Gastrocnemius medialis (tissue), 4 donors: ENCODE measurements at regions of chr1 and their contacts with region 1.

Region 1: GRCh38 chr1:230215031-230215430 is 148.0 kb downstream of the GALNT2 start:
- DNase-seq: peak; percentile 65 to 83
- ATAC-seq: peak; percentile 74 to 88
- H3K4me3 ChIP-seq: peak overlapping the region in 1 of 4 donors; percentile 14
- H3K27ac ChIP-seq: peak overlapping the region; percentile 73 to 81 (median 77)
- H3K4me1 ChIP-seq: peaks cover 52 to 75% of the 10 kb centered on the region in 2 donors
- H3K27me3 ChIP-seq: no peaks in the 10 kb centered on the region
- CTCF ChIP-seq: peak in 4 of 5 experiments; percentile 55 to 78 (median 74)
- POLR2A ChIP-seq: no peak

Region 2: GRCh38 chr1:229848752-229849677 is 366.0 kb before region 1 on chr1:
- in situ Hi-C with region 1: loop called in 1 of 4 experiments (anchors 10 kb)
- intact Hi-C with region 1: no loop called
- DNase-seq: no peak
- ATAC-seq: no peak
- H3K4me3 ChIP-seq: no peak overlapping the region
- H3K27ac ChIP-seq: no peak overlapping the region
- H3K4me1 ChIP-seq: peaks cover 17 to 20% of the 10 kb centered on the region in 2 donors
- H3K27me3 ChIP-seq: no peaks in the 10 kb centered on the region
- CTCF ChIP-seq: peak in 3 of 5 experiments; percentile 16 to 48 (median 40)
- POLR2A ChIP-seq: no peak

Region 3: GRCh38 chr1:230011333-230012092 is 203.5 kb before region 1 on chr1:
- in situ Hi-C with region 1: no loop called
- intact Hi-C with region 1: loop called (anchors 5 kb)
- DNase-seq: peak; percentile 49 to 59
- ATAC-seq: peak; percentile 94 to 97
- H3K4me3 ChIP-seq: no peak overlapping the region
- H3K27ac ChIP-seq: peak overlapping the region; percentile 28 to 85 (median 49)
- H3K4me1 ChIP-seq: peaks cover 25 to 27% of the 10 kb centered on the region in 2 donors
- H3K27me3 ChIP-seq: no peaks in the 10 kb centered on the region
- CTCF ChIP-seq: peak in 1 of 5 experiments; percentile 11
- POLR2A ChIP-seq: no peak

Region 4: DNA sequence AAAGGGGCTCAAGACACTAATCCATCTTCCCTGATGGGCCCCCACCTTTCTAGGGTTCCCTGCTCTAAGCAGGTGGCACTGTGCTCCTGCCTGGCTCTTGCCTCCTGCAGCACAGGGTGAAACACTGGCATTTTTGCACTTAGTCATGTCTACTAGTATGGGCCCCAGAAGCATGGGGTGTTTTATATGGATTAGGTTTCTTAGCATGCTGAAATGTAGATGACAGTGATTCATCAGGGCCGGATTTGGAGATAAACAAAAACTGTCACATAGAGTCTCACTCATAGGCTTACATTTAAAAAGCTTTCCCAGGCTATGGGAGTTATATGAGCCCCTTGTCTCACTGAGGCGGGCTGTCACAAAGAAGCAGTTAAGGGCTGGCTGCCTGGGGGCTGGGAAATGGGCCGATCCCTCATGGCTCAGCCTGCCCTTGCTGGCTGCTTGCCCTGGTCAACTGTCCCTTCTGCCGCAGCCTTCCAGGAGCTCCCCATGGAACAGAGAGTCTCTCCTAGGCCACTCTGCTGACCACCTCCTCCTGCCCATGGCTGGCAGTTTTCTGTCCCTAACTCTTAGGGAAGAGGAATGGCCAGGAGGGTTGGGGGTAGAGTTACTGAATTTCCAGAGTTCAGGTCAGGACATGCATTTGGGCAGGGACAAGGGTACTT is 141.5 kb before region 1 on chr1:
- in situ Hi-C with region 1: loop called in 2 of 4 experiments (anchors 10 kb)
- intact Hi-C with region 1: loop called (anchors 2 kb)
- DNase-seq: peak; percentile 78 to 85
- ATAC-seq: peak; percentile 84 to 90
- H3K4me3 ChIP-seq: peak overlapping the region in 1 of 4 donors; percentile 26
- H3K27ac ChIP-seq: peak overlapping the region; percentile 95 to 97 (median 97)
- H3K4me1 ChIP-seq: peaks cover 89% of the 10 kb centered on the region in 2 donors
- H3K27me3 ChIP-seq: no peaks in the 10 kb centered on the region
- CTCF ChIP-seq: peak in 1 of 5 experiments; percentile 14
- POLR2A ChIP-seq: peak; percentile 48 to 84

Region 5: GRCh38 chr1:230163205-230163604 is 51.8 kb before region 1 on chr1:
- in situ Hi-C with region 1: no loop called
- intact Hi-C with region 1: loop called (anchors 5 kb)
- DNase-seq: peak; percentile 61 to 81
- ATAC-seq: peak; percentile 62 to 64
- H3K4me3 ChIP-seq: no peak overlapping the region
- H3K27ac ChIP-seq: peak overlapping the region; percentile 81 to 91 (median 82)
- H3K4me1 ChIP-seq: peaks cover 68 to 80% of the 10 kb centered on the region in 2 donors
- H3K27me3 ChIP-seq: no peaks in the 10 kb centered on the region
- CTCF ChIP-seq: no peak
- POLR2A ChIP-seq: no peak